Activated B cell treated with CpG ODN at 0.5 μM for 24 hours (primary cell): ENCODE measurements at regions of chr19 and their contacts with region 1.

Region 1: DNA sequence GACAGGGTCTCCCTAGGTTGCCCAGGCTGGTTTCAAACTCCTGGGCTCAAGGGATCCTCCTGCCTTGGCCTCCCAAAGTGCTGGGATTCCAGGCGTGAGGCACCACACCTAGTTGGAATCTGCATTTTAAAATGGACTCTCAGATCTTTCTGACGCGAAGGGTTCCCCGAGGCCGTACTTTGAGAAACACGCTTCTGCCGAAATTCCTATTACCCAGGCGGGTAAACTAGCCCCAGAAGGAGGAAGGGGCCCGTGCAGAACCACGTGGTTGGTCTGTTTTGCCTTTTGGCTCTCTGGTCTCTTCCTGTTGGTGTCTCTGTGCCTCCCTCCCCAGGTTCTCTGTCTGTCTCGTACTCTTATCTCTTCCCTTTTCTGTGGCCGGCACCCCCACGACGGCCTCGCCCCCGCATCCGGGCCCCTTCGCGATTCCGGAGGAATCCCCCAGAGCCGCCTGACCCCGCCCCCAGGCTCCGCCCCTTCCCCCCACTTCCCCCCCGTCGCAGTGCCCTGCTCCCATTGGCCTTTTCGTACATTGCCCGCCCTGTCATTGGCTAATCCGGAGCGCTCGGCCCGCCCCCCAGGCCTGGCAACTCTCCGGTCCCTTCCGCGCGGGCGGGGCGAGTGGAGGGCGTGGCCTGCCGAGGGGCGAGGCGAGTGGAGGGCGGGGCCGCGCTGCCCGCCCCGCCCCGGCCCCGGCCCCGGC is at the start of gene TNFAIP8L1:
- DNase-seq: peak; percentile 99
- ATAC-seq: peak; percentile 92
- H3K4me3 Mint-ChIP-seq: peak within 1 kb of the TSS; percentile 99
- H3K27ac Mint-ChIP-seq: peak within 1 kb of the TSS; percentile 97
- H3K4me1 Mint-ChIP-seq: peaks cover 44% of the 10 kb centered on the region
- H3K27me3 Mint-ChIP-seq: no peaks in the 10 kb centered on the region
- CTCF ChIP-seq: no peak
- total RNA-seq, gene TNFAIP8L1: 13.2 and 15.5 TPM in 2 replicates

Region 2: GRCh38 chr19:2944775-2945574 is 1694.0 kb before region 1 on chr19 and contains the start of gene ZNF77:
- CTCF ChIA-PET with region 1: no interaction called
- POLR2A ChIA-PET with region 1: no interaction called
- intact Hi-C with region 1: loop called (anchors 5 kb)
- DNase-seq: peak; percentile 96
- ATAC-seq: peak; percentile 98
- H3K4me3 Mint-ChIP-seq: peak within 1 kb of the TSS; percentile 96
- H3K27ac Mint-ChIP-seq: peak within 1 kb of the TSS; percentile 95
- H3K4me1 Mint-ChIP-seq: peaks cover 31% of the 10 kb centered on the region
- H3K27me3 Mint-ChIP-seq: no peaks in the 10 kb centered on the region
- CTCF ChIP-seq: no peak
- total RNA-seq, gene ZNF77: 5.2 and 6.7 TPM in 2 replicates

Region 3: DNA sequence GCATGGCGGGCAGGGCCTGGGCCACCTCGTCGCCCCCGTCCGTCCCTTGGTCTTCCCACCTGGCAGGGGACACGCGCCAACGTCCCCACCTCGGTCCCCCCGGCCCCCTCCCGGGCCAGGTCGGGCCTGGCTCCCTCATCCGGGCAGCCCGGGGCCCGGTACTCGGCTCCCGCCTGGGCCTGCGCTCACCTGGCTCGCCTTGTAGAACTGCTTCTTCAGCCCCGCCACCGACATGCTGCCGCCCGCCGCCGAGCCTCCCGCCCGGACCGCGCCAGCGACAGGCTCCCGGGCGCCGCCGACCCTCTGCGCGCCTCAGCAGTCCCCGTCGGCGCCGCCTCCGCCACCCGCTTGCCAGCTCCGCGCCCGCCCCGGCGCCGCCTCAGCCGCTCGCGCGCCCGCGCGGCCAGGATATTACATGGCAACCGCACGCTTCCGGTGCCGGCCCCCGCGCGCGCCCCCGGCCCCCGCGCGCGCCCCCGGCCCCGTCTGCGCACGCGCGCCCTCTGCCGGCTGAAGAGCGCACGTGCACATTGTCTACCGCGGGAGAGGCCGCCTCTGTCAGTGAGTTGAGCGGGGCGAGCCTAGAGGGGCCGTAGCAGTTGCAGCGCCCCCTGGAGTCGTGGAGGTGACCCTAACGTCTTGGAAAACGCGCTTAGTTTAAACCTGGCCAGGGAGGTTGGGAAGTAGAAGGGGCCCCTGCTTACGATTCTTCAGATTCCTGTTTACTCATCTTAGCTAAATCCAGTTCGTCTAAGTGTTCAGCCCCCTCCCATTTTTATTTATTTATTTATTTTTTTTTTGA is 238.6 kb before region 1 on chr19 and contains the start of gene SH3GL1:
- CTCF ChIA-PET with region 1: no interaction called
- POLR2A ChIA-PET with region 1: no interaction called
- intact Hi-C with region 1: loop called (anchors 5 kb)
- DNase-seq: peak; percentile 95
- ATAC-seq: peak; percentile 65
- H3K4me3 Mint-ChIP-seq: peak within 1 kb of the TSS; percentile 88
- H3K27ac Mint-ChIP-seq: peak within 1 kb of the TSS; percentile 91
- H3K4me1 Mint-ChIP-seq: peaks cover 59% of the 10 kb centered on the region
- H3K27me3 Mint-ChIP-seq: no peaks in the 10 kb centered on the region
- CTCF ChIP-seq: peak; percentile 58
- total RNA-seq, gene SH3GL1: 33.8 and 43.7 TPM in 2 replicates

Region 4: DNA sequence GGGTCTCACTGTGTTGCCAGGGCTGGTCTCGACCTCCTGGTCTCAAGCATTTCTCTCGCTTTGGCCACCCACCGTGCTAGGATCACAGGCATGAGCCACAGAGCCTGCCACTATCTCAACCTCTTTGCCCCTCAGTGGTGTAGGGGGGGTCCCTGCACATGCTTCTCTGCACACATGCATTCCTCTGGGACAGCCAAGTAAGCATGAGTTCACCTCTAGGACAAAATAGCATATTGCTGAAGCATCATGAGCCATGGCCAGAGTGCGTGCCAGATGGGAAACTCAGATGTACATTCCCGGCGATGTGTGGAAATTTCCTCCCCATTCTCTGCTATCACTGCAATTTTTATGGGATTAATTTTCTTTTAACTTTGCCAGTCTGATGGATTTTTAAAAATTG is 213.4 kb before region 1 on chr19:
- CTCF ChIA-PET with region 1: no interaction called
- POLR2A ChIA-PET with region 1: no interaction called
- intact Hi-C with region 1: no loop called
- DNase-seq: no peak
- ATAC-seq: no peak
- H3K4me3 Mint-ChIP-seq: no peak overlapping the region
- H3K27ac Mint-ChIP-seq: no peak overlapping the region
- H3K4me1 Mint-ChIP-seq: peaks cover 8% of the 10 kb centered on the region
- H3K27me3 Mint-ChIP-seq: no peaks in the 10 kb centered on the region
- CTCF ChIP-seq: no peak

Region 5: DNA sequence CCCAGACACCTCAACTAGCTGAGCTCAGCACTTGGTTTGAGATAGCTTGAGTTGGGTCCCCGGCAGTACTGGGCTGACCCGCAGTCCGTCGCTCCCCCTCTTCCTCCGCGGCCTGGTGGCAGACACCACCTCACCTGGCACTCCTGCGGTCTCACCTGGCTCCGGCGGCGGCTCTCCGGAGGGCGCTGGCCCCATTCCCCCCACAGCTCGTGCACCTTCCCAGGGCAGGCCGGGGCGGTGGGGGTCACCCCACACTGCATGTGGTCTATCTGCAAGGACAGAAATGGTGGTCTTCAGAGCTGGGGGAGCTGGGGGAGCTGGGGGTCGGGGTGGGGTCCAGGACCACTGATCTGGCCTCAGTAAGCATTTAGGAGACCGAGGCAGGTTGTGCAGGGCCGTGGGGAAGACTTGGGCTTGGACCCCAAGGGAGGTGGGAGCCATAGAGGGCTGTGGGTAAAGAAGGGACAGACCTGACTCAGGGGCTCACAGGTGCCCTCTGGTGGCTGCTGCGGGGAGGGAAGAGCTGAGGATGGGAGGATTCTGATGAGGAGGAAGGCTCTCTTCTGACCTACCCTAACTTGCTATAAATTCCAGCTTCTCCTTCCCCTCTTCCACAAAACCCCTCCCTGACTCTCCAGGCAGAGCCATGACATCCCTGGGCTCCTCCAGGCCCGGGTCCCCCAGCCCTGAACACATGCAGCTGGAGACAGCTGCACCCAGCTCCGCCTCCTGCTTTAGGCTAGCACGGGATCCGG is 114.0 kb before region 1 on chr19:
- CTCF ChIA-PET with region 1: interaction called, 11 read pairs
- POLR2A ChIA-PET with region 1: no interaction called
- intact Hi-C with region 1: loop called (anchors 1 kb)
- DNase-seq: peak; percentile 60
- ATAC-seq: peak; percentile 82
- H3K4me3 Mint-ChIP-seq: no peak overlapping the region
- H3K27ac Mint-ChIP-seq: no peak overlapping the region
- H3K4me1 Mint-ChIP-seq: no peaks in the 10 kb centered on the region
- H3K27me3 Mint-ChIP-seq: peaks cover 6% of the 10 kb centered on the region
- CTCF ChIP-seq: peak; percentile 28

Region 6: GRCh38 chr19:4567584-4568071 is 71.4 kb before region 1 on chr19:
- CTCF ChIA-PET with region 1: interaction called, 17 read pairs
- POLR2A ChIA-PET with region 1: no interaction called
- intact Hi-C with region 1: loop called (anchors 2 kb)
- DNase-seq: peak; percentile 35
- ATAC-seq: peak; percentile 60
- H3K4me3 Mint-ChIP-seq: no peak overlapping the region
- H3K27ac Mint-ChIP-seq: no peak overlapping the region
- H3K4me1 Mint-ChIP-seq: no peaks in the 10 kb centered on the region
- H3K27me3 Mint-ChIP-seq: peaks cover 5% of the 10 kb centered on the region
- CTCF ChIP-seq: no peak

Region 7: DNA sequence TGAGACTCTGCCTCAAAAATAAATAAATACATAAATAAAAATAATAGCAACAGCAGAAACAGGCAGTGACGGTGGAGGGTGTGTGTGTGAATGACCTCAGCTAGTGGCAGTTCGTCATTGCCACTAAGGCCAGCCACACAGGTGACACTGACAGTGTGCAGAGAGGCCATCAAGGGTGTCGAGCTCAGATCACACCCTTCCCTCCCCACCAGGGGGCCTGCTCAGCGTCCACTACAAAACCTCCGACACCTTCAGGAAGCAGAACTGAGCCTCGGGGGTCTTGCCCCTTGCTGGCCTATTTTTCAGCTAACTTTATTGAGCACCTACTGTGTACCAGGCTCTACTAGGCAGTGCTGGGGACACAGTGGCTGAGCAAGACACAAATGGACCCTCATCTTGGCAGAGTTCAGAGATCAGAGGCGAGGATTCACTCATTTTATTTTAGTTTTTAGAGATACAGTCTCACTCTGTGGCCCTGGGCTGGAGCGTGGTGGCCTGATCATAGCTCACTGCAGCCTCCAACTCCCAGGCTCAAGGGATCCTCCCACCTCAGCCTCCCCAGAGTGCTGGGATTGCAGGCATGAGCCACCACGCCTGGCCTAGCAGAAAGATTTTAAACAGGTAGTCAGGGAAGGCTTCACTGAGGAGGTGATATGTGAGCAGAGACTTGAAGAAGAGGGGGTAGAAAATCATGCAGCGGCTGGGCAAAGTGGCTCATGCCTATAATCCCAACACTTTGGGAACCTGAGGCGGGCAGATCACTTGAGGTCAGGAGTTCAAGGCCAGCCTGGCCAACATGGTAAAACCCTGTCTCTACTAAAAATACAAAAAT is 49.2 kb before region 1 on chr19:
- CTCF ChIA-PET with region 1: interaction called, 12 read pairs
- POLR2A ChIA-PET with region 1: interaction called, 4 read pairs
- intact Hi-C with region 1: loop called (anchors 1 kb)
- DNase-seq: no peak
- ATAC-seq: peak; percentile 62
- H3K4me3 Mint-ChIP-seq: no peak overlapping the region
- H3K27ac Mint-ChIP-seq: no peak overlapping the region
- H3K4me1 Mint-ChIP-seq: peaks cover 3% of the 10 kb centered on the region
- H3K27me3 Mint-ChIP-seq: peaks cover 43% of the 10 kb centered on the region
- CTCF ChIP-seq: no peak

Region 8: GRCh38 chr19:4690351-4690750 is 51.4 kb after region 1 on chr19:
- CTCF ChIA-PET with region 1: no interaction called
- POLR2A ChIA-PET with region 1: no interaction called
- intact Hi-C with region 1: no loop called
- DNase-seq: no peak
- ATAC-seq: no peak
- H3K4me3 Mint-ChIP-seq: no peak overlapping the region
- H3K27ac Mint-ChIP-seq: no peak overlapping the region
- H3K4me1 Mint-ChIP-seq: no peaks in the 10 kb centered on the region
- H3K27me3 Mint-ChIP-seq: no peaks in the 10 kb centered on the region
- CTCF ChIP-seq: no peak

Region 9: GRCh38 chr19:4723367-4724187 is 84.6 kb after region 1 on chr19 and contains the start of gene DPP9:
- CTCF ChIA-PET with region 1: no interaction called
- POLR2A ChIA-PET with region 1: no interaction called
- intact Hi-C with region 1: loop called (anchors 1 kb)
- DNase-seq: peak; percentile 92
- ATAC-seq: peak; percentile 94
- H3K4me3 Mint-ChIP-seq: peak within 1 kb of the TSS; percentile 98
- H3K27ac Mint-ChIP-seq: peak within 1 kb of the TSS; percentile 98
- H3K4me1 Mint-ChIP-seq: peaks cover 46% of the 10 kb centered on the region
- H3K27me3 Mint-ChIP-seq: peaks cover 7% of the 10 kb centered on the region
- CTCF ChIP-seq: no peak
- total RNA-seq, gene DPP9: 85.7 and 111 TPM in 2 replicates

Region 10: GRCh38 chr19:4877753-4878490 is 238.9 kb after region 1 on chr19:
- CTCF ChIA-PET with region 1: no interaction called
- POLR2A ChIA-PET with region 1: no interaction called
- intact Hi-C with region 1: no loop called
- DNase-seq: no peak
- ATAC-seq: no peak
- H3K4me3 Mint-ChIP-seq: no peak overlapping the region
- H3K27ac Mint-ChIP-seq: no peak overlapping the region
- H3K4me1 Mint-ChIP-seq: peaks cover 15% of the 10 kb centered on the region
- H3K27me3 Mint-ChIP-seq: no peaks in the 10 kb centered on the region
- CTCF ChIP-seq: no peak